ENCODE measurements at regions of chr1 and their contacts with region 1.

Region 1: DNA sequence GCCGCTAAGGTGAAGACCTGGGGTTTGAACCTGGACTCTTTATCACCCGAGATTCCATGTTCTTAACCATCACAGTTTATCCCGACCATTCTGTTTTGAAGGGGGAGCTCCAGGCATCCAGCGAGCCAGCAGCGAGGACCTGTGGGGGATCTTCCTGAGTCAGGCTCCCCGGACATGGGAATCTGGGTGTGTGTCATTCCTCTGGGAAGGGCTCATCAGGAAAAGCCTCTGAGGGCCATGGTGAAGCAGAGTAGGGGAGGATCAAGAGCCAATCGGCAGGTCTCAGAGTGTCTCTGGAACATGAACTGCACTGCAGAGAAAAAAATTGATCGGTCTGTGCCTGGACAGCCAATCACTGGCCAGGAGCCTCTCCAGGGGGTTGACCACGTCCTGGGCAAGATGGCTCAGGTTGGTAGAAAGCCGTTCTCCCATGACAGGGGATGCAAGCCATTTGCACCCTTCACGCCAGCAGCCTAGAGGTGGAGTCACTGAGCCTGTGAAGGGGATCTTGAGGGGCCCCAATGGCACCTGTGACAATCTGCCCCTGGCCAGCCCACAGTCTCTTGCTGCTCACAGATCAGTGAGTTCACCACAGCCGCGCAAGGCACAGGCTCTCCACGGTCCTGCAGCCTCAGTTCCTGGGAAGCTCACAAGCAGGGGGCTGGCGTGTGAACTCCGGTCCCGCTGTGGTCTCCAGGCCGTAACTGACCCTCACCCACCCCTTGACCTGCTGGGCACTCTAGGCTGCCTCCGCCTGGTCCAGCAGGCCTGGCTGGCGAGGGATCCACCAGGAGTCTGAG is 20.4 kb upstream of the ACTRT2 start:
- DNase-seq: peak in 1 of 2 donors; percentile 61
- H3K4me3 ChIP-seq: no peak overlapping the region
- H3K27ac ChIP-seq: peak overlapping the region in 1 of 2 donors; percentile 78
- H3K4me1 ChIP-seq: peaks cover 13 to 39% of the 10 kb centered on the region in 2 donors
- H3K27me3 ChIP-seq: no peaks in the 10 kb centered on the region
- CTCF ChIP-seq: no peak

Region 2: DNA sequence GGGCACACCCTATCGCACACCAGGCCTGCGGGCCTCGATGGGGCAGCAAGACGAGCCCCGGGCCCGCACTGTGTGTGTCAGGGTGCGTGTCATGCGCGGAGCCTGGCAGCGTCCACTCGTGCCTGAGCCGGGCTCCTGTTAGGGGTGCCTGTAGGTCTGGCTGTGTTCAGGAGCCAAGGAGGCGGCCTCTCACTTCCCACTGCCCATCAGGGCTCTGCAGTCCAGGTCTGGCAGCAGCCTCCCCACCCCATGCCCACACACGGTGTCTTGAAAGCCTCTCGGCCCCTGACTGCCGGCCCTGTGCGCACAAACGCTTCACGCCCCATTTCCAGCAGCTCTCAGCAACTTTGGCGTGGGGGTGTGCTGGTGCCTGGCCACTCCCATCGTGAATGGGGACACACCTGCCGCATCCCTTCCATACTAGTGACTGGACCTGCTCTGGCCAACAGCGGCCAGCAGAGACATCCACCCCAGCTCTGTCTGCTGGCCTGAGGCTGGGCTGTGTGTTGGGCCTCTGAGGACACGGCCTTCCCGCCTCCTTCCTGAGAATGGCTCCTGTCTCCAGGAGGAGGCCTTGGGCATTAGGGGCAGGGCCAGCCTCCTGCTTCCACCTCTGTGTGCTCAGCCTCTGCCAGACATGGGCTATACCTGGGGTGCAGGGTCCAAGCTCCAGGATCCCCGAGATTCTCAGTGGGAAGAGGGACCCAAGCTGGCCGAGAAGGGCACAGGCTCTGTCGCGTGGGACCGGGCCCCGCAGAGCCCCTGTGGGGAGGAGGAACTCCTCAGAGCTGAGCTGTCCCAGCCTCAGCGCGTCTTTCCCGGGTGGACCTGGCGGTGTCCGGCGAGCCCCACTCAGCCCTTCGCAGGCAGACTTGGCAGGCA is 21.4 kb before region 1 on chr1:
- intact Hi-C with region 1: loop called (anchors 2 kb)
- DNase-seq: peak in 1 of 2 donors; percentile 68
- H3K4me3 ChIP-seq: no peak overlapping the region
- H3K27ac ChIP-seq: peak overlapping the region; percentile 39 to 57
- H3K4me1 ChIP-seq: peaks cover 28 to 63% of the 10 kb centered on the region in 2 donors
- H3K27me3 ChIP-seq: no peaks in the 10 kb centered on the region
- CTCF ChIP-seq: no peak

Region 3: DNA sequence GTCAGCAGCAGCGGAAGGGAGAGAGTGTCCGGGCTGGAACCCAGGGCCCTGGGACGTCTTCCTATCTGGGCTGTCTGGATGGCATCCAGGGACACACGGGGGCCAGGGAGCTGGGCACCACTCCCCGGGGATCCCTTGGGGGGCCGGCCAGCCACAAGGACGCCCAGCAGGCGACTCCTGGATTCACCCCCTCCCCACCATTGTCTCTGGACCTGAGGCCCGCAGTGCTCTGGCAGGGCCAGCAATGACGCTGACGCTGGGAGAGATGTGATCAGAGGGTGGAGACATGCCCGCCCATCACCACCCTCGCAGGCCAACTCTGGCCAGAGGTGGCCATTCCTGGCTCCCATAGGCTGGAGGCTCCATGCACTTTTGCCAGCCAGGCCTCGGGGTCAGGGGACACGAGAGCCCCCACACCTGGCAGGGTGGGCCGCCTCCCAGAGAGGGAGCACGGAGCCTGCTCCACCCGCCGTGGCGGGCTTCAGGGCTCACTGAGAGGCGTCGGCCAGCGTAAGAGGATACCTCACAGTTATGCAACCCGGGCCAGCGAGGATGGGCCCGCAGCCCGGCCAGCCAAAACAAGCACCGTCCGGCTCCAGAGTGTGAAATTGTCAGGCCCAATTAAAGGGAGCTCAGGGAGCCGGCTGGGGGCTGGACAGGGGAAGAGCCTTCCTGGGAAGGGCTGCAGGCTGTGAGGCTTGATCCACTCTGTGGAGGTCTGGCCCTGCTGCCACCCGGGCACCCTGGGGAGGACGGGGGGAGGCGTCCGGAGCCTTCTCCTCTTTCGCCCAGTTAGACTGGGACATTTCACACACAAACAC is 30.7 kb after region 1 on chr1:
- intact Hi-C with region 1: no loop called
- DNase-seq: peak in 1 of 2 donors; percentile 66
- H3K4me3 ChIP-seq: no peak overlapping the region
- H3K27ac ChIP-seq: no peak overlapping the region
- H3K4me1 ChIP-seq: peaks cover 0 to 3% of the 10 kb centered on the region in 2 donors
- H3K27me3 ChIP-seq: no peaks in the 10 kb centered on the region
- CTCF ChIP-seq: no peak

Region 4: DNA sequence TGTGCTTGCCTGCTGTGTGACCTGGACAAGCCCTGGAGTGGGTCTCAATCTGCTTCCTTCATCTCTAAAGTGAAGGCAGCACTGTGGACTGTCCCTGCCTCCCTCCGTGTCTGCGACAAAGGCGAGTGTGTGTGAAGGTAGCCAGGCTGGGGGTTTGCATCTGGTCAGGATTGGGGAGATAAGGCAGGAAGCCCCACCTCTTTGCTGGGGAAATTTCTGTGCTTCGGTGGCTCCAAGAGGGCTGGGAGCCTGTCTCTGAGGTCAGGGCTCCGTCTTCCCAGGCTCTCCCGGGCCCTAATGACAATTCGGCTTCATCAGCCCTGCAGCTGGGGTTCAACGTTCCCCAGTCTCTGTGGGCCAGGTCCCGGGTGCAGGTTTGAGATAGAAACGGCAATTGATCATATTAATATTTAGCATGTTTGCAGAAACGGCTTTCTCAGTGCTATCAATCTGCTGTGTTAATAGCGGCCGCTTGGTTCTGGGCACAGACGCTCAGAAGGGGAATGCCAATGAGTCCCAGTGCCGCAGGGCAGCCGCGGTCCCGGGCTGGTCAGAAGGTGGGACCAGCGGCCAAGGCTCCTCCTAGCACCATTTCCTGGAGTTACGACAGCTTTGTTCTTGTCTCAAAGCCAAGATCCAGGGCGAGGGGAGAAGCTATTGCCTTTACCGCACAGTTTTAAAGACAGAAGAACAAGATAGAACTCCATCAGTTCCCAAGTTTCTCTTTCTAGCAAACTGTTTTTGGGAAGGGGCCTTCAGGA is 173.8 kb after region 1 on chr1:
- intact Hi-C with region 1: no loop called
- DNase-seq: peak; percentile 59 to 94
- H3K4me3 ChIP-seq: peak overlapping the region in 1 of 2 donors; percentile 51
- H3K27ac ChIP-seq: peak overlapping the region; percentile 91 to 93
- H3K4me1 ChIP-seq: peaks cover 25 to 62% of the 10 kb centered on the region in 2 donors
- H3K27me3 ChIP-seq: no peaks in the 10 kb centered on the region
- CTCF ChIP-seq: no peak

Measured in ascending aorta (tissue), 2 donors.